ENCODE measurements at regions of chr2 and their contacts with region 1.

Region 1: DNA sequence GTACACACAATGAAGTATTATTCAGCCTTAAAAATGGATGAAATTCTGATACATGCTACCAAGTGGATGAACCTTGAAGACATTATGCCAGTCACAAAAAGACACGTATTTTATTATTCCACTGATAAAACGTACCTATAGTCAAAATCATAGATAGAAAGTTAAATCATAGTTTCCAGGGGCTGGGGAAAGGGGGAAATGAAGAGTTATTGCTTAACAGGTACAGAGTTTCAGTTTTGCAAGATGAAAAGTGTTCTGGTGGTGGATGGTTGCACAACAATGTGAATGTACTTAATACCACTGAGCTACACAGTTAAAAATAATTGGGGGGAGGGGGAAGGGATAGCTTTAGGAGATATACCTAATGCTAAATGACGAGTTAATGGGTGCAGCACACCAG is 279.0 kb upstream of the STON1 start:
- DNase-seq: no peak
- H3K4me3 ChIP-seq: no peak overlapping the region
- H3K4me3 Mint-ChIP-seq: no peak overlapping the region
- H3K27ac Mint-ChIP-seq: no peak overlapping the region
- H3K4me1 ChIP-seq: peaks cover 22% of the 10 kb centered on the region
- H3K4me1 Mint-ChIP-seq: peaks cover 13% of the 10 kb centered on the region
- H3K27me3 ChIP-seq: no peaks in the 10 kb centered on the region
- H3K27me3 Mint-ChIP-seq: no peaks in the 10 kb centered on the region
- CTCF ChIP-seq: no peak

Region 2: DNA sequence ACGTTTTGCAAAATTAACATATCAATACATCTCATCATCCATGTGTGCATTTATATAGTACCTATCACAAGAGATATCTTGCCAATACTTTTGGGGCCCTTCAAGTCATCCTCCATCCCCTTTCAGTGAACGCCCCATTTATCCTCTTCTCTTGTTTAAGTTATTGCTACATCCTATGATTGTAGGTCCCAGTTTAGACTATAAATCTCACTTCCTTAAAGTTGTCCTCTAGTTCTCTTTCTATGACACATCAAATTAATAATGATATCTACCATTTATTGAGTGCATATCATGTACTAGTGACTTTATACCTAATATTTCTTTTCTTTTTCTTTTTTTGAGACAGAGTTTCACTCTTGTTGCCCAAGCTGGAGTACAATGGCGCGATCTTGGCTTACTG is 315.9 kb before region 1 on chr2:
- CTCF ChIA-PET with region 1: no interaction called
- POLR2A ChIA-PET with region 1: no interaction called
- intact Hi-C with region 1: no loop called
- DNase-seq: no peak
- H3K4me3 ChIP-seq: no peak overlapping the region
- H3K4me3 Mint-ChIP-seq: no peak overlapping the region
- H3K27ac Mint-ChIP-seq: no peak overlapping the region
- H3K4me1 ChIP-seq: no peaks in the 10 kb centered on the region
- H3K4me1 Mint-ChIP-seq: no peaks in the 10 kb centered on the region
- H3K27me3 ChIP-seq: no peaks in the 10 kb centered on the region
- H3K27me3 Mint-ChIP-seq: peaks cover 8% of the 10 kb centered on the region
- CTCF ChIP-seq: no peak

Region 3: GRCh38 chr2:48270209-48270608 is 19.3 kb after region 1 on chr2:
- CTCF ChIA-PET with region 1: interaction called, 3 read pairs
- POLR2A ChIA-PET with region 1: no interaction called
- intact Hi-C with region 1: loop called (anchors 1 kb)
- DNase-seq: peak; percentile 68 to 74
- H3K4me3 ChIP-seq: no peak overlapping the region
- H3K4me3 Mint-ChIP-seq: peak overlapping the region; percentile 49
- H3K27ac Mint-ChIP-seq: peak overlapping the region; percentile 74
- H3K4me1 ChIP-seq: peaks cover 33% of the 10 kb centered on the region
- H3K4me1 Mint-ChIP-seq: peaks cover 25% of the 10 kb centered on the region
- H3K27me3 ChIP-seq: no peaks in the 10 kb centered on the region
- H3K27me3 Mint-ChIP-seq: no peaks in the 10 kb centered on the region
- CTCF ChIP-seq: no peak

Region 4: DNA sequence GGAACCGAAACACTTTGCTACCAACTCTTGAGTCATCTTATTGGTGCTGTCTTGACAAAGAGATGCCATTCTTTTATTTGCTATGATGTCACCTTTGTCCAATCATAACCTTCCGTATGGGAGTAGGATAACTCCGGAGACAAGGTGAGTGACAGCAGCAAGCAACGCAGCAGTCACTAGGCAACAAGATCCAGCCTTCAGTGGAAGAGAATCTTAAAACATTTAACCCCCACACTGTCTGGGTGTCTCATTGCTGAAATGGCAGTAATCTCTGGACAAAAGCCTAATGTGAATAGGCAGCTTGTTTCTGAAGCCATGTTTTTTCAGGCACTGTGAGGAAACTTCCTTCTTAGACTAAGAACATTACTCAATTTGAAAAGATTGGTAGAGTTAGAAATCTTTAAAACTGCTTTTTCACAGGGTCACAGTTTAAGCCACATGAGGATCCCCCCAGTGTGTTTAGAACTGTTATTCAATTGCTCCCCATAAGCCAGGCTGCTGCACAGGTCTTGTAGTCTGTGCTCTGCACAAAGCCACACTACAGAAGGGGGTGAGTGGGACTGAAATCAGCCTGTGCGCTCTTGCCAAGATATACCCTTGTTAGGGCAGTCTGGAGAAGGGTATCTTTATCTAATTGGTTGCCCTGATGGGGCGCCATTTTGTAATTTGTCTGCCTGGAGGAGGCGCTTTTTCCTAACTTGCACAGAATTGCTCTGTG is 147.5 kb after region 1 on chr2:
- CTCF ChIA-PET with region 1: no interaction called
- POLR2A ChIA-PET with region 1: no interaction called
- intact Hi-C with region 1: no loop called
- DNase-seq: no peak
- H3K4me3 ChIP-seq: no peak overlapping the region
- H3K4me3 Mint-ChIP-seq: no peak overlapping the region
- H3K27ac Mint-ChIP-seq: no peak overlapping the region
- H3K4me1 ChIP-seq: peaks cover 4% of the 10 kb centered on the region; the same call in 1 of the 2 replicates
- H3K4me1 Mint-ChIP-seq: peaks cover 7% of the 10 kb centered on the region
- H3K27me3 ChIP-seq: no peaks in the 10 kb centered on the region
- H3K27me3 Mint-ChIP-seq: no peaks in the 10 kb centered on the region
- CTCF ChIP-seq: no peak

Region 5: GRCh38 chr2:48738806-48739205 is 487.9 kb after region 1 on chr2:
- CTCF ChIA-PET with region 1: no interaction called
- POLR2A ChIA-PET with region 1: no interaction called
- intact Hi-C with region 1: no loop called
- DNase-seq: no peak
- H3K4me3 ChIP-seq: no peak overlapping the region
- H3K4me3 Mint-ChIP-seq: no peak overlapping the region
- H3K27ac Mint-ChIP-seq: no peak overlapping the region
- H3K4me1 ChIP-seq: peaks cover 16% of the 10 kb centered on the region
- H3K4me1 Mint-ChIP-seq: peaks cover 25% of the 10 kb centered on the region
- H3K27me3 ChIP-seq: no peaks in the 10 kb centered on the region
- H3K27me3 Mint-ChIP-seq: peaks cover 3% of the 10 kb centered on the region
- CTCF ChIP-seq: no peak